Activated CD8-positive, alpha-beta T cell treated with anti-CD3 and anti-CD28 coated beads for 36 hours (primary cell): ENCODE measurements at regions of chr19 and their contacts with region 1.

Region 1: GRCh38 chr19:41821003-41821735 is 23.3 kb downstream of the LYPD4 start:
- DNase-seq: peak; percentile 63
- ATAC-seq: peak; percentile 93
- H3K4me3 Mint-ChIP-seq: no peak overlapping the region
- H3K27ac Mint-ChIP-seq: no peak overlapping the region
- H3K4me1 Mint-ChIP-seq: no peaks in the 10 kb centered on the region
- H3K27me3 Mint-ChIP-seq: peaks cover 12% of the 10 kb centered on the region
- CTCF ChIP-seq: peak; percentile 93

Region 2: GRCh38 chr19:41837981-41838708 is 17.0 kb after region 1 on chr19:
- CTCF ChIA-PET with region 1: interaction called, 16 read pairs
- POLR2A ChIA-PET with region 1: interaction called, 3 read pairs
- intact Hi-C with region 1: no loop called
- DNase-seq: no peak
- ATAC-seq: no peak
- H3K4me3 Mint-ChIP-seq: no peak overlapping the region
- H3K27ac Mint-ChIP-seq: no peak overlapping the region
- H3K4me1 Mint-ChIP-seq: no peaks in the 10 kb centered on the region
- H3K27me3 Mint-ChIP-seq: peaks cover 20% of the 10 kb centered on the region
- CTCF ChIP-seq: no peak

Region 3: DNA sequence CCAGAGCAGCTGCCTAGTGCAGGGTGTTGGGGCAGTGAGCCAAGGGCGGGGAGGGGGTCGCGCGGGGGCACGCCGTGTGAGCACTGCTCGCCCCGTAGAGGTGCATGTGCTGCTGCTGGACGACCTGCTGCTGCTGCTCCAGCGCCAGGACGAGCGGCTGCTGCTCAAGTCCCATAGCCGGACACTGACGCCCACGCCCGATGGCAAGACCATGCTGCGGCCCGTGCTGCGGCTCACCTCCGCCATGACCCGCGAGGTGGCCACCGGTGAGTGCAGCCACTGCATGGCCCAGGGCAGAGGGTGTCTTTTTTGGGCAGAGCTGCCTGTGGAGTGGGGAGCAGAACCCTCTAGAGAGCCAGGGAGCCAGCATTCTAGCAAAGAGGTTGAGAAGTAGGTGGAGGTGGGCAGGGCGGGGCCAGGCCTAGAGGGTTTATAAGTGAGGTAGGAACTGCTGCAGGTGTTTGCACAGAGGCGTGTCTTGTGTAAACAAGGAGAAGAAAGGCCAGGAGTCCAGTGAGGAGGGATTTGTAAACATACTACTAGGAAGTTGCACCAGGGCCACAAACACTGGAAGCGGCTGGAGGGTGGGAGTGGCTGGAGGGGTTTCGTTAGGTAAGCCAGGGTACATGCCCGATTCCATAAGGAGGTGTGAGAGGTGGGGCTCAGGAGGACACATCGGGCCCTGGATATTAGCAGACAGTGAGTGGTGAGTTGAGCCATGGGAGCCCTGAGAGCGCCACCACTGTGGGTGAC is 83.1 kb after region 1 on chr19:
- CTCF ChIA-PET with region 1: no interaction called
- POLR2A ChIA-PET with region 1: no interaction called
- intact Hi-C with region 1: no loop called
- DNase-seq: no peak
- ATAC-seq: no peak
- H3K4me3 Mint-ChIP-seq: no peak overlapping the region
- H3K27ac Mint-ChIP-seq: peak overlapping the region; percentile 48
- H3K4me1 Mint-ChIP-seq: peaks cover 47% of the 10 kb centered on the region
- H3K27me3 Mint-ChIP-seq: no peaks in the 10 kb centered on the region
- CTCF ChIP-seq: no peak